ENCODE measurements at regions of chr1 and their contacts with region 1.

Region 1: GRCh38 chr1:9110669-9111356 is 18.1 kb downstream of the GPR157 start:
- DNase-seq: no peak
- ATAC-seq: peak; percentile 90
- H3K4me3 ChIP-seq: no peak overlapping the region
- H3K27ac ChIP-seq: no peak overlapping the region
- H3K4me1 ChIP-seq: no peaks in the 10 kb centered on the region; the same call in 1 of the 2 replicates
- H3K27me3 ChIP-seq: no peaks in the 10 kb centered on the region
- CTCF ChIP-seq: peak; percentile 96

Region 2: DNA sequence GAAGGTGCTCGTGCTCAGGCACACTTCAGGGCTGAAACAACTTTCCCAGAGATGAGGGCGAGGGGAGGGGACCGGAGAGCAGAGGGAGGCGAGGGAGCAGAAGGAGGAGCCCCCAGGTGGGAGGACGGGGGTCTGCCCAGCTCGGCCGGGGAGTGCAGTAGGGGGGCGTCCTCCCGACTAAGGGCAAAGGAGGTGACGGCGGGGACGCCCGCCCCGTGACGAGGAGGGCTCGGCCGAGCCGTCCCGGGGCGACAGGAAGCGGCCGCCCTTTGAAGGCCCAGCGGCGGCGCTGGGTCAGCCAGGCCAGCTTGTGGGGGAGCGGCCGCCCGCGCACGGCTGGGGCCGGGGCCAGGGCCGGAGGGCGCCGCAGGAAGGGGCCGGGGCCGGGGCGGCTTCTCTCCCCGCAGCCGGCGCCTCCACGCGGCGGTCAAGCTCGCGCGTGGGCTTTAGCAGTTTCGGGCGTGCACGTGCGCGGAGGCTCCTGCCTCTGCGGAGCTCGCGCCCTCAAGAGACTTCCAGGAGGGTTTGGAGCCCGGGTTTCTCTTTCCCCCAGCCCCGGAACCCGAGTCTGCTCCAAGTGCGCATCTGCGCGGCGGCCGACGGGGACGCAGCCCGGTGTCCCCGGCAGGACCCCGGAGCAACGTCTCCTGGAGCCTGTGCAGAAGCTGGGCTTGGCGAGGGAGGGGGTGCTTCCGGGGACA is 893.7 kb before region 1 on chr1:
- CTCF ChIA-PET with region 1: no interaction called
- POLR2A ChIA-PET with region 1: interaction called, 10 read pairs
- in situ Hi-C with region 1: no loop called
- intact Hi-C with region 1: no loop called
- DNase-seq: no peak
- ATAC-seq: no peak
- H3K4me3 ChIP-seq: no peak overlapping the region
- H3K27ac ChIP-seq: peak overlapping the region; percentile 55; the same call in 1 of the 2 replicates
- H3K4me1 ChIP-seq: peaks cover 26% of the 10 kb centered on the region
- H3K27me3 ChIP-seq: no peaks in the 10 kb centered on the region
- CTCF ChIP-seq: no peak

Region 3: GRCh38 chr1:8252266-8252951 is 858.4 kb before region 1 on chr1:
- CTCF ChIA-PET with region 1: no interaction called
- POLR2A ChIA-PET with region 1: no interaction called
- in situ Hi-C with region 1: no loop called
- intact Hi-C with region 1: no loop called
- DNase-seq: no peak
- ATAC-seq: peak; percentile 54; the same call in 1 of the 2 replicates
- H3K4me3 ChIP-seq: no peak overlapping the region
- H3K27ac ChIP-seq: peak overlapping the region; percentile 80
- H3K4me1 ChIP-seq: peaks cover 8% of the 10 kb centered on the region; the same call in 1 of the 2 replicates
- H3K27me3 ChIP-seq: no peaks in the 10 kb centered on the region
- CTCF ChIP-seq: no peak

Region 4: DNA sequence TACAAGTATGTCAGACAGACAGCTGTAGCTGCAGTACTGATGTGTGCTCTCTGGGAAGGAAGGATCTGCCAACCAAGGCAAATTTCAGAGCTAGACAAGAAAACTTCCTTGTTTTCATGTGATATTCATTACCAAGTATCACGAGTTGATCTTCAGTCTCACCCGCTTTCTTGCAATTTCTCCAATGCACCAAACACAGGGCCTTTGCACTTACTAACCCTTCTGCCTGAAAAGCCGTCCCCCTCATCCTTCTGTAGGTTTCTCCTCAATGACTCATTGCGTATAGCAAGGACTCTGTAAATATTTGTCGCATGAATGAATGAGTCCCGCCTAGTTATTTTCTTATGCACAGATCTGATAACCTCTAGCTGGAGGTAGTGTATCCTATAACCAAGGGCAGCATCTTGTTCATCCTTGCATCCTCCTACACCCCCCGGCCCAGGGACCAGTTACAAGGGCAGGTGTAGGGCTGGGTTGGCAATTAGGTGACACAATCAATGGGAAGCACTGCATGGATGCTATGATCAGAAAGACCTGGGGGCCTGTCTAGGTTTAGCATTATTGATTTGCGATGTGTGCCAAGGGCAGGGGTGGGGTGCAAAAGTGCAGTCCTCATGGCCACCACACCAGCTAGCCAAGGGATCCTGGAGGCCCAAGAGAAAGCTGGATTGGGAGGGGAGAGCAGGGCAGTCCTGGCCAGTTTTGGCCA is 69.5 kb after region 1 on chr1:
- CTCF ChIA-PET with region 1: no interaction called
- POLR2A ChIA-PET with region 1: interaction called, 12 read pairs
- in situ Hi-C with region 1: no loop called
- intact Hi-C with region 1: no loop called
- DNase-seq: no peak
- ATAC-seq: peak; percentile 89
- H3K4me3 ChIP-seq: peak overlapping the region; percentile 55 to 61; a peak in 3 of 4 replicates
- H3K27ac ChIP-seq: peak overlapping the region; percentile 70
- H3K4me1 ChIP-seq: peaks cover 26% of the 10 kb centered on the region
- H3K27me3 ChIP-seq: no peaks in the 10 kb centered on the region
- CTCF ChIP-seq: no peak

Region 5: DNA sequence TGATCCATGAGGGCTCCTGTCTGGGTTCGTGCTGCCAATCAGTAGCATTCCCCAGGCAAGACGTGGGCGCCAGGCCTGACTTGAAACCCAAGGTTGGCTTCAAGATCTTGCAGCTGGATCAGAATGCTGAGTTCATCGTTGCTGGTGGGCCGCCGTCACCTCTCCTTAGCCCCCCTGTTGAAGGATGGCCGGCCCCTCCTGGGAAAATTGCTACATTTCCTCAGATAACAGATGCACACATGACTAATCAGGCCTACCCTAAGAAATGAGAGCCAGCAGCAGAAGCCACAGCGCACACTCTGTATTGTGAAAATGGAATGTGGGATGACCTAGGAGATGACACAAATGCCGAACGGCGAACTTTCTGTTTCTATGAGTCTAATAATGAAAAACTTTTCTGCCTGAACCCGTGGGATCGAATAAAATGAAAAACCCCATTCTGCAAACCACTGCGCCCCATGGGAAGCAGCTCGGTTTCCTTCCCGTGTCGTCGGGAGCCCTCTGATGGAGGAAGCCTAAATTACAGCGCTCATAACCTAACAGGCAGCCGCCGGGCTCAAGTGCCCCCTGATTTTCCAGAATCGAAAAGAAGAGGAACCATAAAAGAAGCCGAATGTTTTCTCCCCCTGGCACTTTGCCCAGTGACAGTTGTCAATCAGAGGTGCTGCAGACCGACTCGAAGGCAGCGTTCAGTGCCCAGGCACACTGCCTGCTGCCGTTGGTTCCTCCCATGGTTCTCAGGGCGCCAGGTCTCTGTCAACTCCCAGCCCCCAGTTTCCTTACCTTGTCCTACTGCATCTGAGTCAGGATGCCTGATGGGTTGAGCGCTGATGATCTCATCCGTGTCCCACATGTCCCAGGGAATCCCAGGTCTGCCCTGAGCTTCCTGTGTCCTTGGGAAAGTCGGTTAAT is 85.6 kb after region 1 on chr1:
- CTCF ChIA-PET with region 1: interaction called, 18 read pairs
- POLR2A ChIA-PET with region 1: no interaction called
- in situ Hi-C with region 1: no loop called
- intact Hi-C with region 1: loop called (anchors 2 kb)
- DNase-seq: no peak
- ATAC-seq: peak; percentile 78
- H3K4me3 ChIP-seq: peak overlapping the region in 1 of 2 experiments; percentile 15; a peak in 1 of 4 replicates
- H3K27ac ChIP-seq: no peak overlapping the region; the same call in 1 of the 2 replicates
- H3K4me1 ChIP-seq: peaks cover 16% of the 10 kb centered on the region
- H3K27me3 ChIP-seq: no peaks in the 10 kb centered on the region
- CTCF ChIP-seq: peak; percentile 93

Region 6: GRCh38 chr1:9201401-9202239 is 90.8 kb after region 1 on chr1:
- CTCF ChIA-PET with region 1: interaction called, 18 read pairs
- POLR2A ChIA-PET with region 1: no interaction called
- in situ Hi-C with region 1: no loop called
- intact Hi-C with region 1: loop called (anchors 2 kb)
- DNase-seq: no peak
- ATAC-seq: peak; percentile 37
- H3K4me3 ChIP-seq: peak overlapping the region; percentile 31 to 53
- H3K27ac ChIP-seq: no peak overlapping the region
- H3K4me1 ChIP-seq: peaks cover 28% of the 10 kb centered on the region
- H3K27me3 ChIP-seq: 0 out of 2 replicates have a peak, but pooled peaks cover 4% of the 10 kb centered on the region
- CTCF ChIP-seq: no peak

Region 7: GRCh38 chr1:9211291-9211811 is 100.5 kb after region 1 on chr1:
- CTCF ChIA-PET with region 1: interaction called, 12 read pairs
- POLR2A ChIA-PET with region 1: no interaction called
- in situ Hi-C with region 1: no loop called
- intact Hi-C with region 1: no loop called
- DNase-seq: no peak
- ATAC-seq: no peak
- H3K4me3 ChIP-seq: no peak overlapping the region
- H3K27ac ChIP-seq: no peak overlapping the region
- H3K4me1 ChIP-seq: no peaks in the 10 kb centered on the region
- H3K27me3 ChIP-seq: no peaks in the 10 kb centered on the region
- CTCF ChIP-seq: no peak

Measured in Panc1 (cell line).